ENCODE measurements at regions of chr10 and their contacts with region 1.

Region 1: GRCh38 chr10:100962351-100963080 is 6.8 kb upstream of the SEMA4G start:
- DNase-seq: no peak
- H3K4me3 ChIP-seq: no peak overlapping the region
- H3K27ac ChIP-seq: no peak overlapping the region
- H3K4me1 ChIP-seq: peaks cover 0 to 14% (median 0%) of the 10 kb centered on the region in 6 donors
- H3K27me3 ChIP-seq: no peaks in the 10 kb centered on the region
- CTCF ChIP-seq: no peak
- POLR2A ChIP-seq: no peak

Region 2: GRCh38 chr10:100923580-100923979 is 38.9 kb before region 1 on chr10:
- intact Hi-C with region 1: loop called (anchors 5 kb)
- DNase-seq: no peak
- H3K4me3 ChIP-seq: no peak overlapping the region
- H3K27ac ChIP-seq: no peak overlapping the region
- H3K4me1 ChIP-seq: peaks cover 0 to 27% (median 4%) of the 10 kb centered on the region in 6 donors
- H3K27me3 ChIP-seq: no peaks in the 10 kb centered on the region
- CTCF ChIP-seq: no peak
- POLR2A ChIP-seq: no peak